Activated naive CD8-positive, alpha-beta T cell treated with anti-CD3 and anti-CD28 coated beads, Interleukin-2, amount 10 ng/mL, durations not matched to agents 7 days and 5 days (primary cell): ENCODE measurements at regions of chr1 and their contacts with region 1.

Region 1: DNA sequence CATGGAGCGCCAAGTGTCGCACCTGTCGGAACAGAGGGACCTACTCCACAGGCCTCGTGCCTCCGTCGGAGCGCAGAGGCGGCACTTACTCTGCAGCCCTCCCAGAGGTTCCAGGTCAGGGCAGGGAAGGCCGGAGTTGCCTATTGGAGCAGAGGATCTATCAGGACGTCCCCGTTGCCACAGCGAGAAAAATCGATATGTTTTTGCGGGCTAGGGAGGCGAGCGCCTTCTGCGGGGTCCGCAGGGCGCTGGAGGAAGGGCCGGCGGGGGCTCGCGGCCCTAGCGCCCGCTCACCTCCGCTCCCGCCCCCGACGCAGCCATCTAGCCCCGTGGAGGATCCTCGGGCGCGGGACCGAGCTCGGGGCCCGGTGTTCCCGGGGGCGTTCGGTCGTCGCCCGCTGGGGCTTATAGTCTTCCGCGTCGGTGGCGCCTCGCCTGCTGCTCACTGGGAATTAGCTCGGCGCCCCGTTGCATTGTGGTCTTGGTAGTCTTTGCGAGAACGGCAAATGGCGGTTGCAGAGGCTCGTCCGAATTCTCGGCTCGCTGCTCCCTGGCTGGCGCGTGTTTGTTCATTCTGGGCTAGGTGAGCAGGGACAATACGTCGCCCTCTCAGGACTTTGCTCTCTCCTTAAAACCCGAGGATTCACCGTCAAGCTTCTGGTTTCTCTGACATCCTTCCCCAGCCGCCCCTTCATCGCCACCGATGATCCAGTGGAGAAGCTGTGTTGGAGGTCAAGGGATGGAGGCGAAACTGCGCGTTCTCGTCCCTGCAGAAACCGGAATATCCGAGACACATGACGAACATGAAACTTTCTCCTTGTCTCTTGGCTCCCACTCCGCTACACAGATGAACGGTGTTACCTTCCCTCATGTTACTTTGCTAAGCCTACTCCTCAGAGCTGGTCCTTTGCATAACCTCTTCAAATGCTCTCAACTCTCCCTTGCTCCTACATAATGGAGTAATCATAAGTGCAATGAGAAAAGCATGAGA is at the start of gene JTB:
- DNase-seq: peak; percentile 80
- ATAC-seq: peak; percentile 93
- H3K4me3 Mint-ChIP-seq: peak within 1 kb of the TSS; percentile 97
- H3K27ac Mint-ChIP-seq: peak within 1 kb of the TSS; percentile 93
- H3K4me1 Mint-ChIP-seq: peaks cover 42% of the 10 kb centered on the region
- H3K27me3 Mint-ChIP-seq: no peaks in the 10 kb centered on the region
- total RNA-seq, gene JTB: 118 TPM

Region 2: GRCh38 chr1:153860285-153860684 is 117.3 kb before region 1 on chr1:
- POLR2A ChIA-PET with region 1: no interaction called
- DNase-seq: no peak
- ATAC-seq: no peak
- H3K4me3 Mint-ChIP-seq: no peak overlapping the region
- H3K27ac Mint-ChIP-seq: no peak overlapping the region
- H3K4me1 Mint-ChIP-seq: peaks cover 7% of the 10 kb centered on the region
- H3K27me3 Mint-ChIP-seq: no peaks in the 10 kb centered on the region

Region 3: GRCh38 chr1:153903841-153904455 is 73.6 kb before region 1 on chr1:
- POLR2A ChIA-PET with region 1: no interaction called
- DNase-seq: no peak
- ATAC-seq: no peak
- H3K4me3 Mint-ChIP-seq: no peak overlapping the region
- H3K27ac Mint-ChIP-seq: no peak overlapping the region
- H3K4me1 Mint-ChIP-seq: peaks cover 12% of the 10 kb centered on the region
- H3K27me3 Mint-ChIP-seq: no peaks in the 10 kb centered on the region

Region 4: DNA sequence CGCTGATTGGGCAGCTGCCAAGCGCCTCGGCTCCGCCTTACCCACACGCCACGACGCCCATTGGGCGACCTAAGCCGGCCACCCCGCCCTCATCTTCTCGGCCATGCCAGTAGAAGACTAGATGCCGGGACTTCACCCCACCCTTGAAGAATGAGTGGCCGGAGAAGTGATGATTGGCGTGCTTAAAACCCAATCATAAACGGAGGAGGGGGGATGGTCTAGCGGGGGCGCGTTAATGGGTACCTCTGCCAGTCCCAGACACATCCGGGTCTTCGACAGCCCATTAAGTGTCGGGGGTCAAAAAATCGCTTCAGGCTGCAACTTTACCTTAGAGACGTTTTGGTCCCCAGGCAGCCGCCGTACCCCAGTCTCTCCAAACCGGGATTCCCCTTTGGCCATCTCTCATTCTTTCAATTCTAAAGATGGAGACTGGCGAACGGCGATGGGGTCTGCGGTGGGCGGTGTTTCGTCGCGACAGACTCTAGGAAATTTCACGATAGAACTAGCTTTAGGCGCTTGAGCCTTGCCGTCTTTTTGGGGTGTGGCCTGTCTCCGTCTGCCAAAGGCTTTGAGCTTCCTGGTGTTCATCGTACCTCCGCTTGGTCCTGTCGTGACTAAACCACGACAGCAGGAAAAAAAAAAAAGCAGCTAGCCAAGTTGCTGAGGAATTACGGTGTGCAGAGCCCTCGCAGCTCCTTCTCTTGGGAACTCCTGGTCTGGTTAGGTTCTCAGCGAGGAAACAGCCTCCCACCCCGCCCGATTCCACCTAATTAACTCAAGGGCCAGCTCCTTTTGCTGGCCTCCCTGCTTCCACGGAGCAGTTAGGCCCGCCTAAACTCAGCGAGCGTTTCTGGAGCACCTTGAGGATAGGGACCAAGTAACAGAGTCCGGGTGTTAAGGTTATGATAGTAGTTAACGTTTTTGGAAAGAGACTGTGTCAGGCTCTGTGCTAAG is 54.3 kb before region 1 on chr1 and contains the start of gene GATAD2B:
- POLR2A ChIA-PET with region 1: interaction called, 10 read pairs
- DNase-seq: peak; percentile 96
- ATAC-seq: peak; percentile 94
- H3K4me3 Mint-ChIP-seq: peak within 1 kb of the TSS; percentile 95
- H3K27ac Mint-ChIP-seq: peak within 1 kb of the TSS; percentile 98
- H3K4me1 Mint-ChIP-seq: peaks cover 36% of the 10 kb centered on the region
- H3K27me3 Mint-ChIP-seq: no peaks in the 10 kb centered on the region
- total RNA-seq, gene GATAD2B: 86.3 to 96.7 TPM

Region 5: DNA sequence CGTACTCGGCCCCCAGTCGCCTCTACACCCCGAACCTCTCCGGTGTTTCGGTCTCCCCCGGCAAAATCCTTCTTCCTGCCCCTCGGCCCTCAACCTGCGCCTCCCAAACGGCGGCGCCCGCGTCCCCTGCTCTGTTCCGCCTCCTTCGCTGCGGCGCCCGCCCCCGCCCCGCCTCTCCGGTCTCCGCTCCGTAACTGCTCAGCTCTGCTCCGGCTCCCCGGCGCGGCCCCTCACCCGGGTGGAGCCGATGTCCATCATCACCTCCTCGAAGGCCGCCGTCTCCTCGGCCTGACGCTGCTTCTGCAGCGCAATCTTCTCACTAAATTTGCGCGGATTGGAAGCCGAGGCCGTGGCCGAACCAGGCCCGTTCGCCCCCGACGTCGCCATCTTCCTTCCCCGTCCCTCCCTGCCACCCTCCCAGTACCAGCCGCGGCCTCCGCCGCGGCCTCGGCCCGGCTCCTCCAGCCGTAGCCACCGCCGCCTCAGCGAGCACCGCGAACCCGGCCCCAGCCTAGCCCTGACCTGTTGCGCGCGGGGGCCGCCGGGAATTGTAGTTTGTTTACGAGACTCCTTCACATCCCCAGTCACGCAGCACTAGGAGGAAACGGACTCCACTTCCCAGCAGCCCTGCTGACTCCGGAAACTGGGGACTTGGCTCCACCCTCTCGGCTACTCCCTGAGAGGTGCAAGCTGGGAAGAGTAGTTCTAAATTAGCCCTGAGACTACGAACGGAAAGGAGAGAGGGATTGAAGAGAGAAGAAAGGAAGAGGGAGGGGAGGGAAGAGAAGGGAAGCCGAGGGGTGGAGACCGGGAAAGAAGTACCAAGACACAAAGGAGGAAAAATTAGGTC is 19.2 kb before region 1 on chr1 and contains the start of gene CRTC2:
- POLR2A ChIA-PET with region 1: interaction called, 34 read pairs
- DNase-seq: peak; percentile 94
- ATAC-seq: peak; percentile 86
- H3K4me3 Mint-ChIP-seq: peak within 1 kb of the TSS; percentile 94
- H3K27ac Mint-ChIP-seq: peak within 1 kb of the TSS; percentile 98
- H3K4me1 Mint-ChIP-seq: peaks cover 45% of the 10 kb centered on the region
- H3K27me3 Mint-ChIP-seq: no peaks in the 10 kb centered on the region
- total RNA-seq, gene CRTC2: 104 to 115 TPM

Region 6: DNA sequence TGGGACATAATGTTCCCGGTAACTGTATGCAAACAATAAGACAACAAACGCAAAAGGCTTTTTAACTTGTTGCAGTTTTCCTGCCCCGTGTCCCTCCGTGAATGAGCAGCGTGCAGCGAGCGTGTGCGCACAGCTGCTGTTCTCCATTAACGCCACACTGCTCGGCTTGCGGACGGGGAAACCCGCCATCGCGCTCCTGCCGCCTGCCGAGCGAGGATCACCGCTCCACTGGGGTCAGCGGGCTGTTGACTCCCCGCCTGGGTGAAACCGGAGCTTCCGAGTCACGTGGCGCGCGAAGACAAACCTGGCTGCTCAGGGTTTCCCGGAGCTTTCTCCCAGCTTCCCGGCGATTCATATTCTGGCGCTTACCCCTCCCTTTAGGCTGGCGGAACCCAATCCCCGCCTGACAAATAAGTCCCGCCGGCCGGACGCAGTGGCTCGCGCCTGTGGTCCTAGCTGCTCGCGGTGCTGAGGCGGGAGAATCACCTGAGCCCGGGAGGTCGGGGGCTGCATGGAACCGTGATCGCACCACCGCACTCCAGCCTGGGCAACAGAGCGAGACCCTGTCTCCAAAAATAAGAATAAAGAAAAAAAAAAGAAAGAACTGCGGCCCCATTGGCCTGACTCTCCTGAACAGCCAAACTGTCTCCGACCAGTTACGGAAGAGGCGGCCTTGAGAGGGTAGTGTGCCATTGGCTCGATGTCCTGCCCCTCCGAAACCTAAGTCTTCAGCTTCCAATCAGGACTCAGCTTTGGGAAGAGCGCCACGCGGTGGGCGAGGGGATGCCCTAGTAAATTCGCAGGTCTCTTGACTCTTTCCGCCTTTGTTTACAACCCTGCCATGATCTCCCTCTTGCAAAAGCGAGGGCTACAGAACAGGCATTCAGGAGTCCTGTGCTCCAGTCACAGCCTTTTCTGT is 10.2 kb before region 1 on chr1 and contains the start of gene CREB3L4:
- POLR2A ChIA-PET with region 1: interaction called, 100 read pairs
- DNase-seq: peak; percentile 80
- ATAC-seq: peak; percentile 87
- H3K4me3 Mint-ChIP-seq: peak within 1 kb of the TSS; percentile 96
- H3K27ac Mint-ChIP-seq: peak within 1 kb of the TSS; percentile 95
- H3K4me1 Mint-ChIP-seq: peaks cover 51% of the 10 kb centered on the region
- H3K27me3 Mint-ChIP-seq: no peaks in the 10 kb centered on the region
- total RNA-seq, gene CREB3L4: 8.2 to 10.0 TPM

Region 7: DNA sequence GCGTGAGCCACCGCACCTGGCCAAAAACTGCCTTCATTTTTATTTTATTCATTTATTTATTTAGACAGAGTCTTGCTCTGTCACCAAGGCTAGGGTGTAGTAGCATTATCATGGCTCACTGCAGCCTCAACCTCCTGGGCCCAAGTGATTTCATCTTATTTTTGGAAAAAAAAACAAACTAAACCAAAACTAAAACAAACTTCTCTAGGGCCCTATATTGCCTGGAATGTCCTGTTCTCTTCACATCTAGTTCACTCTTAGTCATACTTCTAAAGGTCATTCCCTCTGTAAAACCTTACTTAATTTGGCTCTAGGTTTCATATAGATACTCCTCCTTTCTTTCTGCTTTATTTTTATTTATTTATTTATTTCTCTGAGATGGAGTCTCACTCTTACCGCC is 28.6 kb after region 1 on chr1:
- POLR2A ChIA-PET with region 1: no interaction called
- DNase-seq: no peak
- ATAC-seq: no peak
- H3K4me3 Mint-ChIP-seq: no peak overlapping the region
- H3K27ac Mint-ChIP-seq: no peak overlapping the region
- H3K4me1 Mint-ChIP-seq: no peaks in the 10 kb centered on the region
- H3K27me3 Mint-ChIP-seq: no peaks in the 10 kb centered on the region

Region 8: DNA sequence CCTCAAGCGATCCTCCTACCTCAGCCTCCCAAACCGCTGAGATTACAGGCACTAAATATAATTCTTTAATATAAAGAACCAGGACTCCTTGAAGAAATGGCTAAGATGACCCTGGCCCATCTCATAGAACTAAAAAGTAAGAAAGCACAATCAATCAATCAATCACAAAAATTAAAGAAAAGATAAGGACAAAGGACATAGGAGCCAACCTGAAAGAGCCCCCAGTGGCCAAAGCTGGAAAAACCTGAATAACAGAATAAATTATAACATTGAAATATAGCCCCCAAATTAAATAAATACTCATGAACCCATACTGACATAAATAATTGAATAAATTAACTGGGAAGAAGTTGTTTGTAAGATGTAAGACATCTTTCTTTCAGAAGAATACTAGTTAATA is 168.4 kb after region 1 on chr1:
- POLR2A ChIA-PET with region 1: no interaction called
- DNase-seq: no peak
- ATAC-seq: no peak
- H3K4me3 Mint-ChIP-seq: no peak overlapping the region
- H3K27ac Mint-ChIP-seq: no peak overlapping the region
- H3K4me1 Mint-ChIP-seq: no peaks in the 10 kb centered on the region
- H3K27me3 Mint-ChIP-seq: no peaks in the 10 kb centered on the region